Pancreas (tissue), 10 donors: ENCODE measurements at regions of chr10 and their contacts with region 1.

Region 1: GRCh38 chr10:63173468-63174232 is 40.5 kb downstream of the NRBF2 start:
- DNase-seq: no peak
- ATAC-seq: peak in 1 of 4 donors; percentile 56
- H3K4me3 ChIP-seq: no peak overlapping the region
- H3K27ac ChIP-seq: no peak overlapping the region
- H3K4me1 ChIP-seq: peaks cover 0 to 7% (median 4%) of the 10 kb centered on the region in 3 donors
- H3K27me3 ChIP-seq: no peaks in the 10 kb centered on the region
- CTCF ChIP-seq: no peak

Region 2: DNA sequence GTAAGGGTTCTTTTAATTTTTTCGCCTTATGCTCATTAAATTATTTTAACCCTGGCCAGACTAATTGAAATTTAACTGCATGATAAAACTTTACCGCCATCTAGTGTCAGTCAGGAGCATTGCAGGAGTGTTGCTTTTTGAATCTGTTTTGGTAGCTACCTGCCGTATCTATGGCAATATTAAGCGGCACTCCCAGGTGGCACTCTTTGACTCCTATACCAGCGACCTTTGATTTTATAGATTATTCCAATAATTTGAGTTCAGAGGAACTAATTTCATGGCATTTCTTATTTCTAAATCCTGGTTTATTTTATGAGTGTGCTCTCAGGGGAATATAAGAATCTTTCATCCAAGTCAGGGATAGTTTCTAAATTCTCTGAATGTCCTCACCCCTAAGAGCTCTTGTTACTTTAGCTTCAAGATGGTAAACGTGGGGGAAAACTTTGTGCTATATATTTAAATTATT is 546.5 kb after region 1 on chr10:
- intact Hi-C with region 1: loop called in 1 of 3 experiments (anchors 10 kb)
- DNase-seq: peak in 3 of 6 donors; percentile 43 to 69 (median 57)
- ATAC-seq: peak; percentile 89 to 96 (median 94)
- H3K4me3 ChIP-seq: no peak overlapping the region
- H3K27ac ChIP-seq: no peak overlapping the region
- H3K4me1 ChIP-seq: peaks cover 6 to 17% (median 10%) of the 10 kb centered on the region in 3 donors
- H3K27me3 ChIP-seq: no peaks in the 10 kb centered on the region
- CTCF ChIP-seq: peak; percentile 83 to 96 (median 93)